H1 (cell line): ENCODE measurements at regions of chr4 and their contacts with region 1.

Region 1: DNA sequence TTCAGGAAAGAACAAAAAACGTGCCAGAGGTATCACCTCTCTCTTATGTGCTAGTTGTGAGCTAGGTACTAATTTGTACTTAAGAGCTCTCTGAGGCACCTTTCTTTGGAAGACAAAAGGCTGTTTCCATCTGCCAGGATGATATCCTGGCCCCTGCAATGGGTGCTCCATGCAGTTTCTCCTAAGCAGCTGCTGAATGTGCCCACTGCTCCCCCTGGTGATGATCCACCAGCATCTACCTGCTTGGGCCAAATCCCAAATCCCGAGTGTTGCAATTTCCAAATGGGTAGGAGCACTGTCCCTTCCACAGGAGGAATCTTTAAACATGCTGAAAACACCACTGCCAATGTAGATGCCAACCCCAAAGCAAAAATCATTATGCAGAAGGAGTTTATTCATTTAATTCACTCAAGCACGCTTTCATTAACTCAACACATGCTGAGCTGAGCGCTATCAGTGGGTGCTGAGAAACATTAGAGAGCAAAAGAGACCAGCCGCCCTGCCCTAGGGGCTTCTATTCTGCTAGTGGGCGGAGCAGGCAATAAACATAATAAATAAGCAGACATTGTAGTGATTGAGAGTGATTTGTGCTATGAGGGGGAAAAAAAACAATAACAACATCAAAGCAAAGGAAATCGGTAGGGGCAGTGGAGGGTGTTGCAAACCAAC is 69.6 kb upstream of the C4orf50 start:
- DNase-seq: peak; percentile 59 to 75
- H3K4me3 ChIP-seq: no peak overlapping the region
- H3K27ac ChIP-seq: no peak overlapping the region
- H3K4me1 ChIP-seq: peaks cover 0 to 8% (median 4%) of the 10 kb centered on the region in 4 experiments; a peak in 4 of 7 replicates
- H3K27me3 ChIP-seq: 0 out of 7 replicates have a peak, but pooled peaks cover 0 to 3% (median 0%) of the 10 kb centered on the region in 4 experiments
- CTCF ChIP-seq: peak; percentile 86 to 88 (median 88)
- EP300 ChIP-seq: no peak
- POLR2A ChIP-seq: no peak
- RAD21 ChIP-seq: peak; percentile 82 to 87

Region 2: DNA sequence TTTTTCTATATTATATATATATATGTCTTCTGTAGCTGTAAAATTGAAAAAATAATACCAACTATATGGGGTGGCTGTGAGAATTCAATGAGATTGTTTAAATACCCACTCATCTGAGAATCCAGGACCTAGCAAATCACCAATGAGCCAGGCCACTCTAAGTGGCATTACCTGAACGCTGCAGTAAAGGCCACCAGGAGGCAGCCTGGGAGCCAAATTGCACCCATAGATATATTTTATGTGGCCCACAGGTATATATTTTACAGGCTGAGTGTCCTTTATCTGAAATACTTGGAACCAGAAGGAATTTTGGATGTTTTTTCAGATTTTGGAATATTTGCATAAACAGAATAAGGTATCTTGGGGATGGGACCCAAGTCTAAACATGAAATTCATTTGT is 11.4 kb before region 1 on chr4:
- CTCF ChIA-PET with region 1: interaction called, 64 read pairs
- POLR2A ChIA-PET with region 1: no interaction called
- DNase-seq: no peak
- H3K4me3 ChIP-seq: no peak overlapping the region
- H3K27ac ChIP-seq: no peak overlapping the region
- H3K4me1 ChIP-seq: peaks cover 4 to 8% (median 6%) of the 10 kb centered on the region in 4 experiments
- H3K27me3 ChIP-seq: no peaks in the 10 kb centered on the region
- CTCF ChIP-seq: peak; percentile 68 to 80 (median 69)
- EP300 ChIP-seq: no peak
- POLR2A ChIP-seq: no peak
- RAD21 ChIP-seq: peak; percentile 64 to 75

Region 3: GRCh38 chr4:6207602-6208001 is 119.8 kb after region 1 on chr4:
- CTCF ChIA-PET with region 1: no interaction called
- POLR2A ChIA-PET with region 1: no interaction called
- DNase-seq: no peak
- H3K4me3 ChIP-seq: no peak overlapping the region
- H3K27ac ChIP-seq: no peak overlapping the region
- H3K4me1 ChIP-seq: no peaks in the 10 kb centered on the region
- H3K27me3 ChIP-seq: no peaks in the 10 kb centered on the region; a peak in 1 of 7 replicates
- CTCF ChIP-seq: no peak
- EP300 ChIP-seq: no peak
- POLR2A ChIP-seq: no peak
- RAD21 ChIP-seq: no peak

Region 4: DNA sequence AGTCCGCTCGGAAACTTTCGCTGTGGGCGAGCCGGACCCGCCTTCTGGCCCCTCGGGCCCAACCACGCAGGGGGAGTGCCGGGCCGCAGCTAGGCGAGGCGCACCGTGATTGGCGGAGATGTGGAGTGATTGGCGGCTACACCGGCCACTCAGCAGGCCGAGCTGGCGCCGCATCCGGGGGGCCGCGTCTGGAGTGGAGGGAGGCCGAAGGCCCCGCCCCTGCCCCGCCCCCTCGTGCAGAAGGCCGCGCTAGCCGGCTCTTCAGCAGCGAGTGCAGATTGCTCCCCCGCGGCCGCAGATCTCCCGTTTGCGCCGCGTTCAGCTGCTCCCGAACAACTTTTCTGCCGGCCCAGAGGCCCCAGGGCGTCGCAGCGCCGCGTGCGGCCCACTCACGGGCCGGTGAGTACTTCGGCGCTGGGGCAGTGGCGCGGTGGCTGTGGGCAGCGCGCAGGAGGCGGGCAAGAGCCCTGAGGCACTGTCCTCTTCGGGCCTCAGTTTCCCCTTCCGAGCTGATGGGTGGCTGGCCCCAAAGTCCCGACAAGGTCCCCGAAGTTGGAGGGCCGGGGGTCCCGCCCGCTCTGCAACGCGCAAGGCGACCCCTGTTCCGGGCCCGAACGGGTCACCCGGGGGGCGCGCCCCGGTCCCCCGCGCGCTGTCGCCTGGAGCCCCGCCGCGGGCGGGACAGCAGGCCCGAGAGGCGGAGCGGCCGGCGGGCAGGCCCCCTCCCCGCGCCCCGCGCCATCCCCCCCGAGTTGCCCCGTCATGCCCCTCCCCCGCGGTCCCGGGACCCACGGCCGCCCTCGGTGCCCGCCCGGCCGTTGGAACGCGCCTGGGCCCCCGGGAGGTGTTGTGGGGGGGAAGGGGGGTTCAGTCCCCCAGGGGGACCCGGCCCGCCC is 182.1 kb after region 1 on chr4 and contains the start of gene WFS1:
- CTCF ChIA-PET with region 1: no interaction called
- POLR2A ChIA-PET with region 1: no interaction called
- DNase-seq: peak; percentile 90 to 98
- H3K4me3 ChIP-seq: peak within 1 kb of the TSS; percentile 49 to 94 (median 74)
- H3K27ac ChIP-seq: no peak within 1 kb of the TSS
- H3K4me1 ChIP-seq: peaks cover 4 to 21% (median 9%) of the 10 kb centered on the region in 4 experiments
- H3K27me3 ChIP-seq: peaks cover 0 to 4% (median 0%) of the 10 kb centered on the region in 4 experiments; a peak in 1 of 7 replicates
- CTCF ChIP-seq: no peak
- EP300 ChIP-seq: no peak
- POLR2A ChIP-seq: peak in 1 of 2 experiments; percentile 63; a peak in 2 of 3 replicates
- RAD21 ChIP-seq: no peak
- total RNA-seq, gene WFS1: 29.1 and 34.0 TPM in 2 replicates